ENCODE measurements at regions of chr3 and their contacts with region 1.

Region 1: DNA sequence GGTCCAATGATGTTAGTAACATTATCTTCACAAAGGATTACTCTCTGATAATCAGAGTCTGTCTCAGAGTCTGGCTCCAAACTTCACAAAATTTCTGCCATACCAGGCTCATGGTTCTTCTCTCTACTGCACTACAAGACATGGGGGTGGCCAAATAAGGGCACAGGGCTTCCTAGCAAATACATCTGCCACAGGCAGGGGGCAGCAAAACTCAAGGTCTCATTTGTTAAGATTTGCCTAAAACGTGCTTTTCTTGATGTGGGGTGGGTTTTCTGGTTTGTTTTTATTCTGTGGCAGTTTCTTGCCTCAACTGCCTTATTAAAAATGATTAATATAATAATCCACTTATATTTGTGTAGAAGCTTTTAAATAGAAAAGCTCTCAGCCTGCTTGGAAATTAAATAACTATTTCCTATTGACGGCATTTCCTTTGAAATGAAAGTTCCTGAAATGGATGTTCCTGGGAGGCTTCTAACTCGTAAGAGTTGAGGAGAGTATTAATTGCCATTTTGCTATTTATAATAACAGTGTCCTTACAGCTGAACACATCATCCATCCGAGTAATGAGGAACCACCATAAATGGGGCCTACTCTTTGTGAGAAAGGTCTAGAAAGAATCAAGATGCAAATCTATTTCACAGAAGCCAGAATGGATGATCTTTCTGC is 53.8 kb downstream of the SST start:
- DNase-seq: peak; percentile 46
- ATAC-seq: peak; percentile 91
- H3K4me3 ChIP-seq: no peak overlapping the region
- H3K27ac ChIP-seq: no peak overlapping the region
- H3K4me1 ChIP-seq: no peaks in the 10 kb centered on the region
- H3K27me3 ChIP-seq: peaks cover 24% of the 10 kb centered on the region
- CTCF ChIP-seq: peak; percentile 70 to 82 (median 80); a peak in 5 of 6 replicates
- POLR2A ChIP-seq: no peak
- RAD21 ChIP-seq: peak; percentile 68

Region 2: DNA sequence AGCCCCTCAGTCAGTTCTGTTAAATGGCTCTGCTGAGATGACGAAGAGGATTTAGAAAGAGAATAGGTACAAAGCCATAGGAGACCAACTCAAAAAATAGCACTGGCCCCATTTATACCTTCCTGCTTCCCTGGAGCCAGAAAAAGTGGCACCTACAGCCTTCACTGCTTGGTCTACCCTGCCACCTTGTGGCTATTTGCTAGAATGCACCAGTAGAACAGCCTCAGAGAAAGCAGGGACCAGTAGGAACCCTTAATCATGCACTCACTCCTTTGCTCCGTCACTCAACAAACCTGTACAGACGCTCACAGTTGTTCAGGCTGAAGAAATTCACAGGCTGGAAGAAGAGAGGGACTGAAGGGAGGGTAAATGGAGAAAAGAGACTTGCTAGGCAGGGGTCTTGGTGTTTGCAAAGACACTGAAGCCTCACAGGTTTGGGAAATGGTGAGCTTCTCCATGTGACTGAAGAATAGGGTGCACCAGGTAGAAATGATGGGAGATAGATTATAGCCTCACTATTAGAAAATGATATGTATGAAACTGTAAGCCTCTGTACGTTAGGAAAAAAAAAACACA is 98.1 kb after region 1 on chr3:
- CTCF ChIA-PET with region 1: interaction called, 3 read pairs
- POLR2A ChIA-PET with region 1: no interaction called
- RAD21 ChIA-PET with region 1: no interaction called
- intact Hi-C with region 1: loop called (anchors 1 kb)
- DNase-seq: peak; percentile 72
- ATAC-seq: peak; percentile 96
- H3K4me3 ChIP-seq: no peak overlapping the region
- H3K27ac ChIP-seq: no peak overlapping the region
- H3K4me1 ChIP-seq: peaks cover 3% of the 10 kb centered on the region in 2 experiments; a peak in 2 of 4 replicates
- H3K27me3 ChIP-seq: no peaks in the 10 kb centered on the region
- CTCF ChIP-seq: peak; percentile 85 to 95 (median 93)
- POLR2A ChIP-seq: no peak
- RAD21 ChIP-seq: peak; percentile 97

Region 3: DNA sequence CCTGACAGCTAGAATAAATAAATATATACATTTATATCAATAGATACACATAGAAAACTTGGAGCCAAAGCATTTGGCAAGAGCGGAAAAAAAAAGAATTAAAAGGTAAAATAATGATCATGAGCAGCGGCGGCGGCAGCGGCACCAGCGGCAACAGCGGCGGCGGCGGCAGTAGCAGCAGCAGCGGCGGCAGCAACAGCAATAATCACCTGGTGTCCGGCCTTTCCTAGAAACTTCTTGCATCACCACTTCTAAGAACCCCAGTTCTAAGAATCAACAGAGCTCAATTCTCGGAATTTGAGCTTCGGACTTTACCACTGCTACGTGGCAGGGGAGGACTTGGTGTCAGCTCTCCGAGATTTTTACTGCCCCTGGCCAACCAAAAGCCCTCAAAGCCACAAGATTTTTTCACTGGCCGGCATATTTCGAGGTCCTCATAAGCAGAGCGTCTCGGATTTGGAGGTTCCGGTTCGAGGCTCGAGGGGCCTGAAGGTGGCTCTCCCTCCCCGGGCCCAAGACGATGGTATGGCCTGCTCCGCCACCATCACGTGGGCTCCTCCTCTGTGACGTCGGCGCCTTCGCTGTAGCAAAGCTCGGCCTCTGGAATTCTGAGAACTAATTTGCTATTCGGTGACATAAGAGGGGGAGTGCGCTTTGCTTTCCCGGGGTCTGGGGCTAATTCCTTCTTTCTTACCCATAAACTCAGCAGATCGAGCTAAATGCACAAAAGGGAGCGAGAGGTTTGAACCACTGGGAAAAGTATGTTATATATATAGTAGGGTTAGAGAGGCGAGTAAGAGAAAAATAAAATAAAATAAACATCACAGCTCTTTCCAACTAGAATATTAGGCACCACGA is 129.0 kb after region 1 on chr3 and contains the start of gene BCL6:
- CTCF ChIA-PET with region 1: no interaction called
- POLR2A ChIA-PET with region 1: no interaction called
- RAD21 ChIA-PET with region 1: no interaction called
- intact Hi-C with region 1: no loop called
- DNase-seq: peak; percentile 98
- ATAC-seq: peak; percentile 67
- H3K4me3 ChIP-seq: peak within 1 kb of the TSS; percentile 89 to 91
- H3K27ac ChIP-seq: peak within 1 kb of the TSS; percentile 78
- H3K4me1 ChIP-seq: peaks cover 29 to 65% of the 10 kb centered on the region in 2 experiments; a peak in 3 of 4 replicates
- H3K27me3 ChIP-seq: no peaks in the 10 kb centered on the region
- CTCF ChIP-seq: no peak
- POLR2A ChIP-seq: peak; percentile 86
- RAD21 ChIP-seq: no peak
- total RNA-seq, gene BCL6: 17.5 TPM

Measured in HCT116 (cell line).